ENCODE measurements at regions of chr1 and their contacts with region 1.

Region 1: GRCh38 chr1:209428241-209428921 is 155.1 kb upstream of the CAMK1G start:
- DNase-seq: peak; percentile 89 to 97
- H3K4me3 ChIP-seq: peak overlapping the region; percentile 100
- H3K27ac ChIP-seq: peak overlapping the region; percentile 98
- H3K4me1 ChIP-seq: peaks cover 34% of the 10 kb centered on the region
- H3K27me3 ChIP-seq: no peaks in the 10 kb centered on the region
- CTCF ChIP-seq: no peak

Region 2: DNA sequence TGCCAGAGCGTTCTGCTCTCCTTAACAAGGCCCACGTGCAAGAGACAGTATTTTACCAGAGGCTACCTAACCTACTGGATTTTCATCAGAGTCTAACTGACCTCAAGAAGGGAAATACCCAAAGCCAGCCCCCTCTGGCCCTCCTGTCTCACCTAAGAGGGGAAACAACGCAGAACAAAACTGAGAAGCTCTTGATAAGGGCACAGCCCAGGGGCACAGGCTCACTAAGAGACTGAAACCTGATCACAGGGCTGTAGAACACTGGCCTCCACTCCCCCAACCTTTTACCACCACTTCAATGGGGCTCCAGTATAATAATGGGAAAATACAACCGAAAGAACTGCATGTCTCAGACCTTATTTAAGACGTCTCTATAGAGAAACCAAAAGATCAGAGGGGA is 294.4 kb before region 1 on chr1:
- CTCF ChIA-PET with region 1: no interaction called
- POLR2A ChIA-PET with region 1: no interaction called
- intact Hi-C with region 1: no loop called
- DNase-seq: no peak
- H3K4me3 ChIP-seq: no peak overlapping the region
- H3K27ac ChIP-seq: no peak overlapping the region
- H3K4me1 ChIP-seq: no peaks in the 10 kb centered on the region
- H3K27me3 ChIP-seq: peaks cover 50% of the 10 kb centered on the region
- CTCF ChIP-seq: no peak

Region 3: DNA sequence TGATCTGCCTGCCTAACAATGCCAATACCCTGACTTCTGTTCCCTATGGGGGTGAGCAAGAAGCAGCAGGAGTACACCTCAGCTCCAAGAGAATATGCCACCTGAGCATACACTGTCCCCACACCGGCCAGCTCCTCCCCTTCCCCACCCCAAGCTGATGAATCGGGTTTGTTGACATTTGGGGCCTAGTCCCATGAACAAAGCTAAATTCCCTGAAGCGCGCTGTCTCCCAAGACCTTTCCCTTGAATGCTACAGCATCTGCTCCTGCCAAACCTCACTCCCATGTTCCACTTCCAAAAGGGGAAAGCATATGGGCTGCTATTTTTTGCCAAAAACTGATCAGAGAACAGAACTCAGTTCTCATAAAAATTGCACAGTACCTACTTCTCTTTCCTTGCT is 65.3 kb before region 1 on chr1:
- CTCF ChIA-PET with region 1: no interaction called
- POLR2A ChIA-PET with region 1: interaction called, 20 read pairs
- intact Hi-C with region 1: loop called (anchors 1 kb)
- DNase-seq: peak; percentile 55 to 76
- H3K4me3 ChIP-seq: no peak overlapping the region
- H3K27ac ChIP-seq: peak overlapping the region; percentile 26; the same call in 1 of the 2 replicates
- H3K4me1 ChIP-seq: peaks cover 32% of the 10 kb centered on the region
- H3K27me3 ChIP-seq: no peaks in the 10 kb centered on the region
- CTCF ChIP-seq: no peak

Region 4: DNA sequence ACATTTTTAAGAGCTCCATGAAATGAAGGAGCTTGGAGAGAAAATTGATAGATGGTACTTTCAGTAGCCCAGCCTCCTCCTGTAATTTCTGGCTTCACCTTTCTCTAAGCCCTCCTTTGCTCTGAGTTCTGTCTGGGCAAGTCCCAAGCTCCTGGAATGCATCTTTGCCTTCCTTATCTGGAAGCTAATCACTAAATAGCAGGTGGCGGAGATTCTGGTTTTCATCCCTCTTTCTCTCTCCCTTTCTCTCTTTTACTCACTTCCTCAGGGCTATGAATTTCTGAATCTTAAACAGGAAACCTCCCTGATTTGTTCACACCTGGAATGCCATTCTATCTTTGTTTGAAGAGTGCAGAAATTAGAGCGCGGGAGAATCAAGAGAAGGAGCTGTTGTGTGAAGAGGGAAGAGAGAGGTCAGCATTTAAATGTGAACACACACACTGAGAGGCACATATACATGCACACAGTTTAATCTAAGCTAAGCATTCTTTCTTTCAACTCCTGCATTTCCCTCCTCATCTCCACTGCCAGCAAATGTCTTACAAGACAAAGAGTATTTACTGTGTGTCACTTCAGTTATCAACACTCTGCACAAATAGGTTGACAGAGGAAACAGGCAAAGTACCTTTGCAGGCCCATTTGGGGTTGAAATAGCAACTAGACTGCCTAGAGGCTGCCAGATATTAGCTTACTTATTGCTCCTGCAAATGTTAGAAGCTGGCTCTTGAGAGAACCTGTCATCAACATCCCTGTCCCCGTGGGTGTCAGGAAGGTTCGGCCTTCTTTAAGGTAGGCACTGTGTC is 44.3 kb before region 1 on chr1:
- CTCF ChIA-PET with region 1: interaction called, 4 read pairs
- POLR2A ChIA-PET with region 1: interaction called, 25 read pairs
- intact Hi-C with region 1: loop called (anchors 1 kb)
- DNase-seq: peak; percentile 55 to 90
- H3K4me3 ChIP-seq: no peak overlapping the region
- H3K27ac ChIP-seq: peak overlapping the region; percentile 77
- H3K4me1 ChIP-seq: peaks cover 69% of the 10 kb centered on the region
- H3K27me3 ChIP-seq: no peaks in the 10 kb centered on the region
- CTCF ChIP-seq: no peak

Region 5: DNA sequence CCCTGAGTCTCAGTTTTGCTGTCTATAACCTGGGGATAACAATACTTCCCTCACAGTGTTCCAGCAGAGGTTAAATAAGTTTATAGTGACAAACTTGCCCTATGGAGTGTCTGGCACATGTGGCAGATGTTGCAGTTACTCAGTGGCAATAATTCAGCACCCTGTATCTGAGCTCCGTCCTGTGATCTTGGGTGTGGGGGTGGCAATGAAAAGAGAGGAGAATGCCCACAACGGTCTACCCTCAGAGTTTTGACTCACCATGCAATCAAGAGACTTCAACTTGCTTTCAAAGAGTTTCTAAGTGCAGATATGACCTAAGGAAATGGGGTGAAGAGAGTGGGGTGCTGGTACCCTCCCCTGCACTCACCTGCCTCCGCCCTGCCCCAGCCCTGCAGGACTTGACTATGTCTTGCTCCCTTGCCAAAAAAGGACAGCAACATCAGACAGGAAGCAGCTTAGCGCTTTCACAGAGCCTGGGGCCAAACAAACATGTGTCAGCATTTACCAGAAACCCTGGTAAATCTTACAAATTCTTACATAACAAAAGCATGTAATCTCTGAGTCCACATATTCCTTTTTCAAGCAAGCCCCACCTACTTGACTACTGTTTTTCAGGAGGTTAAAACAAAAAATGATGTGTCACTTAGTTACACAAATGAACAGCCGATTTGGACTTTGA is 29.9 kb before region 1 on chr1:
- CTCF ChIA-PET with region 1: no interaction called
- POLR2A ChIA-PET with region 1: interaction called, 77 read pairs
- intact Hi-C with region 1: loop called (anchors 1 kb)
- DNase-seq: peak; percentile 88 to 98
- H3K4me3 ChIP-seq: no peak overlapping the region; the same call in 1 of the 2 replicates
- H3K27ac ChIP-seq: peak overlapping the region; percentile 99
- H3K4me1 ChIP-seq: peaks cover 64% of the 10 kb centered on the region
- H3K27me3 ChIP-seq: no peaks in the 10 kb centered on the region
- CTCF ChIP-seq: no peak

Region 6: GRCh38 chr1:209405183-209405814 is 23.1 kb before region 1 on chr1:
- CTCF ChIA-PET with region 1: interaction called, 5 read pairs
- POLR2A ChIA-PET with region 1: interaction called, 50 read pairs
- intact Hi-C with region 1: loop called (anchors 1 kb)
- DNase-seq: peak in 1 of 2 experiments; percentile 84
- H3K4me3 ChIP-seq: peak overlapping the region; percentile 43
- H3K27ac ChIP-seq: peak overlapping the region; percentile 97
- H3K4me1 ChIP-seq: peaks cover 89% of the 10 kb centered on the region
- H3K27me3 ChIP-seq: no peaks in the 10 kb centered on the region
- CTCF ChIP-seq: no peak

Region 7: GRCh38 chr1:209416039-209416438 is 12.3 kb before region 1 on chr1:
- CTCF ChIA-PET with region 1: interaction called, 8 read pairs
- POLR2A ChIA-PET with region 1: interaction called, 25 read pairs
- intact Hi-C with region 1: loop called (anchors 1 kb)
- DNase-seq: peak; percentile 81 to 85
- H3K4me3 ChIP-seq: no peak overlapping the region
- H3K27ac ChIP-seq: peak overlapping the region; percentile 67
- H3K4me1 ChIP-seq: peaks cover 44% of the 10 kb centered on the region
- H3K27me3 ChIP-seq: no peaks in the 10 kb centered on the region
- CTCF ChIP-seq: no peak

Measured in PC-9 (cell line).